ENCODE measurements at regions of chr1 and their contacts with region 1.

Region 1: DNA sequence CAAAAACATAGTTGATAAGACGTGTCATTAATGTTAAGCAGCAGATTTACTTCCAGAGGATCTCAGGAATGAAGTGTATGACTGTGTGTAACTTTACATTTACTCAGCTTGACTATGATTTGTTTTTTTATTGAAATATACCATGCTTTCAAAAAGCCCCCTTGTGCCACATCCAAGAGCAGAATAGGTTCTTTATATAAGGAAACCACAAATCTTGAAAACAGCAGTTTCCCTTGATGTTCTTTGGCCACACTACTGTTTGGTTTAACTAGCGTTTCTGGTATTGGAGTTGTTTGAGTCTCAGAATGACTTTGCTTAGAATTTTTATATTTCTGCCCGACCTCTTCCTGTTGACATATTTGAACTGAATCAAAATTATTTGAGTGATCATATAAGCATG is 25.0 kb downstream of the LRRC8C start:
- DNase-seq: peak; percentile 58
- ATAC-seq: peak; percentile 71
- H3K4me3 Mint-ChIP-seq: no peak overlapping the region
- H3K27ac Mint-ChIP-seq: peak overlapping the region; percentile 87
- H3K4me1 Mint-ChIP-seq: peaks cover 85% of the 10 kb centered on the region
- H3K27me3 Mint-ChIP-seq: no peaks in the 10 kb centered on the region
- CTCF ChIP-seq: no peak

Region 2: GRCh38 chr1:89670163-89670562 is 12.3 kb after region 1 on chr1:
- CTCF ChIA-PET with region 1: interaction called, 23 read pairs
- POLR2A ChIA-PET with region 1: interaction called, 11 read pairs
- intact Hi-C with region 1: no loop called
- DNase-seq: no peak
- ATAC-seq: peak; percentile 79
- H3K4me3 Mint-ChIP-seq: peak overlapping the region; percentile 34
- H3K27ac Mint-ChIP-seq: peak overlapping the region; percentile 84
- H3K4me1 Mint-ChIP-seq: peaks cover 95% of the 10 kb centered on the region
- H3K27me3 Mint-ChIP-seq: no peaks in the 10 kb centered on the region
- CTCF ChIP-seq: no peak

Measured in activated CD8-positive, alpha-beta T cell treated with anti-CD3 and anti-CD28 coated beads for 36 hours (primary cell).